Gastrocnemius medialis (tissue), 4 donors: ENCODE measurements at regions of chr1 and their contacts with region 1.

Region 1: DNA sequence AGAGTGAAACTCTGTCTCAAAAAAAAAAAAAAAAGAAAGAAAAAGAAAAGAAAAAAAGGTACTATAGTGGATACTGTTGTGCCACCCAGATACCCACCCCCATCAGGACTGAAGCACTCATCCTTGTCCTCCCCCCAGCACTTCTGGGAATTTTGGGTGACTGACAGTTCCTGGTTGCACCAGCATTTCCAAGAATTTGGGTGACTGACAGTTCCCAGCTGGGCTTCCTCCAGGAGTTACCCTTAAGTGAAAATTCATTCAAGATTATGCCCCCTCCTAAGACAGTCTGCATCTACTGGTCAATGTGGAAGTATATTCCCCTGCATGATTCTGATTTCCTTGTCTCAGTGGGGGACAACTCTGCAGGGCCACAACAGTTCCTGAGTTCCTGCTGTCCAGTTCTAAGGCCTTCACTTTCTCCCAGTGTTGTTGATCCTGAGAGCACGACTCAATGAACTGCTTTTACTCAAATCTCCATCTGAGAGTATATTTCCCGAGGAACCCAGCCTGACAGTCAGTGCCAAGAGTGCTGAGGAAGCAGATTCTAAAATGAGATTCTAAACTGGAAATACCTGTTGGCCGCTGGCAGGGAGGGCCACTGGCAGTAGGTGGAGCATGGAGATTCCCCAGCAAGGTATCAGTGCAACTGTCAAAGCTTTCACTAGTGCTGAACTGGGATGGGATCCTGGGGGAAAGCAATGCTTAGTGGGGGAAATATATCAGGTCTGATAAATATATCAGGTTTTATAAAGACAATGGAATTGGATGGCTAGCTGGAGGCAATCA is 18.5 kb downstream of the RIIAD1 start:
- DNase-seq: no peak
- ATAC-seq: no peak
- H3K4me3 ChIP-seq: no peak overlapping the region
- H3K27ac ChIP-seq: no peak overlapping the region
- H3K4me1 ChIP-seq: peaks cover 4 to 5% of the 10 kb centered on the region in 2 donors
- H3K27me3 ChIP-seq: no peaks in the 10 kb centered on the region
- CTCF ChIP-seq: no peak
- POLR2A ChIP-seq: no peak

Region 2: DNA sequence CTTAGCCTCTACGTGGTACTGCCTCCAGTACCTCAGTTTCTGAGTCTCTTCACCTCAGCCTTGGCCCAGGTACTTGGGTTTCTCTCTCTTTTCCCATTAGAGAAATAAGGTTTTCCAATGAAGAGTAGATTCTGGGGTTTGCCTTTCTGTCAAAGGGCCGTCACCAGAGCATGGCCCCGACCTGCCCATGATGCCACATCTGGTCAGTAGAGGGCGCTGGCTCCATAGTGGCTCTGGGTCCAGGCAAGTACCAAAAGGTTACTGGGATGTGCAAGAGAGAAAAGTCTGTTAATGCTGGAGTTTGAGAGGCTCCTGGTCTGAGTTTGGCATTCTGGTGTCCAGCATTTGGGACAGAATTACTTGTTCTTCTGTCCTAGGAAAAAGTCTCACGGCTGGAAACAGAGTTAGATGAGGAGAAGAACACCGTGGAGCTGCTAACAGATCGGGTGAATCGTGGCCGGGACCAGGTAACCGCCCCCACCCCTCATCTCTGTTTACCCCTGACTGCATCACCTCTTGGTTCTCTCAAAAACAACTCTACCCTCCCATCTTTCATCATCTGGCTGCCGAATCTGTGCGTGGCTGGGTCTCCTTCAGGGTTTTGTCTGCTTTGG is 205.0 kb before region 1 on chr1:
- in situ Hi-C with region 1: loop called in 1 of 4 experiments (anchors 10 kb)
- intact Hi-C with region 1: loop called (anchors 1 kb)
- DNase-seq: peak; percentile 45 to 55
- ATAC-seq: peak in 1 of 2 donors; percentile 68
- H3K4me3 ChIP-seq: no peak overlapping the region
- H3K27ac ChIP-seq: no peak overlapping the region
- H3K4me1 ChIP-seq: peaks cover 4 to 6% of the 10 kb centered on the region in 2 donors
- H3K27me3 ChIP-seq: no peaks in the 10 kb centered on the region
- CTCF ChIP-seq: peak; percentile 37 to 86 (median 72)
- POLR2A ChIP-seq: no peak

Region 3: GRCh38 chr1:151539990-151540981 is 199.5 kb before region 1 on chr1 and contains the start of gene TUFT1:
- in situ Hi-C with region 1: loop called in 1 of 4 experiments (anchors 10 kb)
- intact Hi-C with region 1: no loop called
- DNase-seq: peak; percentile 86 to 89
- ATAC-seq: peak; percentile 94 to 96
- H3K4me3 ChIP-seq: peak within 1 kb of the TSS; percentile 65 to 84 (median 72)
- H3K27ac ChIP-seq: peak within 1 kb of the TSS; percentile 61 to 76 (median 72)
- H3K4me1 ChIP-seq: peaks cover 4 to 19% of the 10 kb centered on the region in 2 donors
- H3K27me3 ChIP-seq: no peaks in the 10 kb centered on the region
- CTCF ChIP-seq: no peak
- POLR2A ChIP-seq: peak; percentile 86 to 96
- total RNA-seq, gene TUFT1: 1.2 to 4.0 (median 2.7) TPM

Region 4: DNA sequence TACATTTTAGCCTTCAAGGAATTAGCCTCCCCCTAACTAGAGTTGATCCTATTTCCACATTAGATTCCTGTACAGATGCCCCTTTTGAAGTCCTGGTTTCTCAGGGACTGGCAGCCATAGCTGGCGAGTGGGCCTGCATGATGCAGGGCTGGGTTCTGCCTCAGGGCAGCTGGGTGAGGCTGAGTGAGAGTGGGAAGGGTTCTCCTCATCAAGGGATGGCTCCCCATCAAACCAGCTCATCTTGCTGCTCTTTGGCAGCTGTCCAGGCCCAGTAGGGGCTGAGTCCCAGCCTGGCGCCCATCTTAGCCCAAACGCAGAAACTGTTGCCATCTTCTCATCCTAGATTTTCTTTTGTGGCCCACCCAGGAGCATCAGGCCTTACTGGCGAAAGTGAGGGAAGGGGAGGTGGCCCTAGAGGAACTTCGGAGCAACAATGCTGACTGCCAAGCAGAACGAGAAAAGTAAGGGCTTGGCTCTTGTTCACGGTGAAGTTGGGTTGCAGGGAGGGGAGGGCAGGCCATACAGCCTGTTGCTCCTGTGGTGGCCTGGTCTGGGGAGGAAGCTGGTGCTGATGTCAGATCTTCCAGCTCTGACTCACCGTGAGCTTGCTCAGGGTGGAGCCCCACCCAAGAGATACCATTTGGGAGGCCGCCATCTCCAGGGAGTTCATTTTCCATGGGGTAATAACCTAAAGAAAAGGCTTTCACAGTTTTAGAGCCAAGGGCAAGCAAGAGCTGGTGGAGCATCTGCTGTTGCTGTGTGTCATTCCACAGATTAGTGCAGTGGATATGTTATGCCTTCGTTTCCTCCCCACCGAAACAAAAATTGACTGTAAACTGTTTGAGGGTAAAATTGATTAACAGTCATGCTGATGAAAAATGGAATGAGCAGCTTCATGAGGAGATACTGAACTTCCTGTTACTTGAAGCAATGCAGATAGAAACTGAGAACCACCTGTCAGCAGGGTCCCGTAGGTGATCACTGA is 164.9 kb before region 1 on chr1:
- in situ Hi-C with region 1: no loop called
- intact Hi-C with region 1: no loop called
- DNase-seq: no peak
- ATAC-seq: no peak
- H3K4me3 ChIP-seq: no peak overlapping the region
- H3K27ac ChIP-seq: no peak overlapping the region
- H3K4me1 ChIP-seq: no peaks in the 10 kb centered on the region
- H3K27me3 ChIP-seq: no peaks in the 10 kb centered on the region
- CTCF ChIP-seq: no peak
- POLR2A ChIP-seq: no peak

Region 5: GRCh38 chr1:151594143-151594625 is 145.6 kb before region 1 on chr1:
- in situ Hi-C with region 1: loop called (anchors 5 kb)
- intact Hi-C with region 1: loop called (anchors 1 kb)
- DNase-seq: peak; percentile 50 to 70
- ATAC-seq: peak; percentile 65 to 81
- H3K4me3 ChIP-seq: no peak overlapping the region
- H3K27ac ChIP-seq: no peak overlapping the region
- H3K4me1 ChIP-seq: peaks cover 0 to 7% of the 10 kb centered on the region in 2 donors
- H3K27me3 ChIP-seq: no peaks in the 10 kb centered on the region
- CTCF ChIP-seq: peak; percentile 82 to 96 (median 84)
- POLR2A ChIP-seq: no peak

Region 6: GRCh38 chr1:151693076-151693651 is 46.6 kb before region 1 on chr1:
- in situ Hi-C with region 1: no loop called
- intact Hi-C with region 1: loop called (anchors 1 kb)
- DNase-seq: no peak
- ATAC-seq: no peak
- H3K4me3 ChIP-seq: no peak overlapping the region
- H3K27ac ChIP-seq: no peak overlapping the region
- H3K4me1 ChIP-seq: no peaks in the 10 kb centered on the region
- H3K27me3 ChIP-seq: no peaks in the 10 kb centered on the region
- CTCF ChIP-seq: peak in 1 of 5 experiments; percentile 6
- POLR2A ChIP-seq: no peak